ENCODE measurements at regions of chr12 and their contacts with region 1.

Region 1: DNA sequence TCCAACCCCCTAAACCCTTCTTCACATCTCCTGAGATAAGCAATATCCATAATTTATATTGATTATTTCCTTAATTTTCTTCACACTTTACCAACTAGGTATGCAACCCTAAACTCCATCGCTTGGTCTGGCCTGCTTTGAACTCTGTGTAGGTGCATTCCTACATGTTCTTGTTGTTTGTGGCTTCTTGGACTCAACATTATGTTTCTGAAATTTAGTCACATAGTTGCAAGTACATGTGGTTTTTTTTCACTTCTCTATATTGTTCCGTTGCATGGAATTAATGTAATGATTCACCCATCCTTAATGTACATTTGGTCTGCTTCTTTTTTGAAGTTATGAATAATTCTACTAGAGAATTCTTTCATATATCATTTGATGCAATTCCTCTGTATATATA is 1.6 kb upstream of the TAS2R30 start:
- DNase-seq: no peak

Region 2: GRCh38 chr12:11183011-11183410 is 46.9 kb after region 1 on chr12:
- intact Hi-C with region 1: loop called in 1 of 2 experiments (anchors 10 kb)
- DNase-seq: no peak

Region 3: DNA sequence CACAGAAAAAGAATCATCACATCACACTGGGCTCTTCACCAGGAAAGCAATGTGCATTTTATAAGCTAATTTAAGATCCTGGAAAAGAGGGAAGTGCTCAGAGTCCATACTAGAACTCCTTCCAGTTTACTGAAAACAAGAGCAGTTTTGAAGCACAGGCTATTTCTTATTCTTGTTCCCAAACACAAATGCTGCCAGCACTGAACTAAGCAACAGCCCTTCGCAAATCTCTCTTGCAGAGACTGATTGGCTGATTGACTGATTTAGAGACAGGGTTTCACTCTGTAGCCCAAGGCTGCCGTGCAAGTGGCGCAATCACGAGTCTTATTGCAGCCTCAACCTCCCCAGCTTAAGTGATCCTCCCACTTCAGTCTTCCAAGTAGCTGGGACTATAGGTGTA is 979.4 kb after region 1 on chr12:
- intact Hi-C with region 1: no loop called
- DNase-seq: no peak